ENCODE measurements at regions of chr7 and their contacts with region 1.

Region 1: DNA sequence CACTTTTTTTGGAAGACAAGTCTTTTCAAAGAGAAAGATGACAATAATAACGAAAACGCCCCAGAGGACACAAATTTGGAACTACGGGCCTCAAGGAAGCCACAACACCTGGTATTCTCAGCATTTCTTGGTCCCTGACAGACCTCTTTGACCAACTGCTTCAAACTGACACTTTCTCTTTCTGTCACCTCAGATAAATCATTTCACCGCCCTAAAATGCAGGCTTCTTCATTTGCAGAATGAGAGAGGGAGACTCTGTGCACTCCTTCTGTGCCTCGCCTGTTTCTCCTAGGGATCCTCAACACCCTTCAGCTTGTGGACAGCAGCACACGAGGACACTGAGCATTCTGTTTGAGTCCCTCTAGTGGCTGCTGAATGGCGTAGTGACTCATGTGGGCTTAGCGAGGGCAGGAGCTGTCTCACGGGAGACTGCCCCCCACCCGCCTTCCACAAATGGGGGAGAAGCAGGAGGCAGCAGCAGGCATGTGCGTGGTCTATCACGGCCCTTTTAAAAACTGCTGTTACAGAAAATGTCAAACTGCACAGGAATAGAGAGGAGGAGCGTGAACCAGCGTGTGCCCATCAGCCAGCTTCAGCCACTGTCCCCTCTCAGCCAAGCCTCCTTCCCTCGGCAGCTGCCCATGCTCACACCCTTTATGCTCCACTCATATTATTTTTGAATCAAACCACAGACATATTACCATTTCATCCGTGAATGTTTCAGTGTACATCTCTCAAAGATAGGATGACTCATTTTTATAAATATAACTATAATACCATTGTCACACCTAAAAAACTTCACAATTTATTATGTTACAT is 41.4 kb downstream of the GSDME start:
- DNase-seq: no peak
- H3K4me3 ChIP-seq: no peak overlapping the region
- CTCF ChIP-seq: peak; percentile 66

Region 2: DNA sequence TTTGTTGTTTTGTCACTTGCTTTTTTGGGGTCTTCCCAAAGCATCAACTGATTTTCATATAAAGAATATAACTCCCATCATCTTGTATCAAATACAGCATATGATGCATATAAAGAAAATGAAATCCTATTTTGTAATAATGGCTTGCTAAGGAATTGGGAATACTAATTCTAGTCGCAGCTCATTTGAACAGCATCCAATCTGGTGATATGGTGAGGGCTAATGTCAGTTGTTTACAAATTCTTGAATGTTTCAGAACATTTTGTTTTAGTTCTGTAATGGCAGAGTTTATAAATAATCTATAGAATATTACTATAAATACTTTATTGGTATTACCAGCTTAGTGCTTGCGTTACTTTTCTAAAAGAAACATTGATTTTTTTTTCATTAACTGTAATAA is 133.7 kb before region 1 on chr7:
- CTCF ChIA-PET with region 1: no interaction called
- POLR2A ChIA-PET with region 1: no interaction called
- DNase-seq: no peak
- H3K4me3 ChIP-seq: no peak overlapping the region
- CTCF ChIP-seq: no peak

Region 3: GRCh38 chr7:24701261-24702235 is 14.3 kb before region 1 on chr7:
- CTCF ChIA-PET with region 1: interaction called, 27 read pairs
- POLR2A ChIA-PET with region 1: no interaction called
- DNase-seq: peak; percentile 86
- H3K4me3 ChIP-seq: no peak overlapping the region
- CTCF ChIP-seq: no peak

Region 4: DNA sequence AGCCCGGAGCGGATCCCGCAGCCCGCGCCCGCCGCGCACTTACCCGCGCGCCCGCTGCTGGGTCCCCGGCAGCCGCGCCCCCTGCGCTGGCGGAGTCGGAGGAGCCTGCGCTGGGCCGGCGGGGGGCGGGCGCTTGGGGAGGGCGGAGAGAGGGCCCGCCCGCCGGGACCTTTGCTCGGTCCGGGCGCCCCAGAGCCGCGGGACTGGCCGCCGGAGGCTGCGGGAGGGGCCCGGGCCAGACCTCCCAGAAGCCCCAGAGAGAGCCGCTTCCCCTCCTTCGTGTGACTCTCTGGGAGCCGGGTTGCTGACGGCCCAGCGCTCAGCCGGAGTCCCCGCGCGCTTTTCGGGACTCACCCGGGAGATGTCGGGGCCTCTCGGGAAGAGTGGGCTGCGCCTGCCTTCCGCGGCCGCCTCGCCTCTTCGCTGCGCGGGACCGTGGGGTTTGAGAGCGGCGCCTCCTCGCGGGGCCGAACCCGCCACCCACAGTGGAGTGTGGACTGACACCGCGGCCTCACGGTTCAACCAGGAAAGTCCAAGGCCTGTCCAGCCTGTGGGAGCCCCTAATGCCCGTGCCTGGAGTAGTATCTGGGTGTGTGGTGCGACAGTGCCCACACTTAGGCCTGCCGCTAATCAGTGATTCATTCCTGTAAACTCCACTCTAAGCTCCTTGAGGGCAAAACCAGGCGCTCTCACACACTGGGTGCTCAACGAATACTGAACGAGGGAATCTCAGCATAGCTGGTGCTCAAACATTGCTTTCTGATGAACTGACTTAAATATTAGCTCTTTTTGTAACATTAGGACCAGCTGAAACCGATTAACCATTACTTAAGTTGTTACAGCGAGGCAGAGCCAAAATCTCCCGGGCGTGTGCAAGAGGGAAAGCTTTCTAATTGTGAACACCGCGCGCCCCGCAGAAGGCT is 41.7 kb after region 1 on chr7 and contains the start of gene GSDME:
- CTCF ChIA-PET with region 1: no interaction called
- POLR2A ChIA-PET with region 1: no interaction called
- DNase-seq: no peak
- H3K4me3 ChIP-seq: peak within 1 kb of the TSS; percentile 69
- CTCF ChIP-seq: peak; percentile 2